ENCODE measurements at regions of chr3 and their contacts with region 1.

Region 1: DNA sequence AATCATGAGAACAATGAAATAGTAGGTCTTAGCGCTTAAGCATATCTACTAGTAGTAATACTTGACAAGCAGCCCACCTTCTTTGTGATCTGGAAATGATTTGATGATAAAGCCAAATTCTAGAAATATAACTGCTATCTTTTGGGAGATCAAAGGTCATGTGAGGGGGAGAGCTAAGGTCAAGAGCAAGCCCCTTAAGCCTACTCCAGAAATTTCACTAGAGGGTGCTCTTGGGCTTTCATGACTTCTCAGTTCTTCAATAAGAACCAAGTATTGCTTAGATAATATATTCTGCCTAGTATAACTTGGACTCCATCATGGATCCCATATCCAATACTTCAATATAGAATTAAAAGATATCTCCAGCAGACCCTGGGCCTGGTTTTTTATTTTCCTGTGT is 319.6 kb downstream of the ZBTB20 start:
- DNase-seq: peak; percentile 11
- H3K4me3 Mint-ChIP-seq: no peak overlapping the region
- H3K27ac Mint-ChIP-seq: no peak overlapping the region
- H3K4me1 Mint-ChIP-seq: peaks cover 4% of the 10 kb centered on the region
- H3K27me3 Mint-ChIP-seq: no peaks in the 10 kb centered on the region

Region 2: GRCh38 chr3:114383875-114384557 is 443.5 kb before region 1 on chr3:
- CTCF ChIA-PET with region 1: interaction called, 3 read pairs
- intact Hi-C with region 1: loop called (anchors 5 kb)
- DNase-seq: peak; percentile 82
- H3K4me3 Mint-ChIP-seq: peak overlapping the region; percentile 70
- H3K27ac Mint-ChIP-seq: peak overlapping the region; percentile 67
- H3K4me1 Mint-ChIP-seq: peaks cover 13% of the 10 kb centered on the region
- H3K27me3 Mint-ChIP-seq: no peaks in the 10 kb centered on the region

Region 3: DNA sequence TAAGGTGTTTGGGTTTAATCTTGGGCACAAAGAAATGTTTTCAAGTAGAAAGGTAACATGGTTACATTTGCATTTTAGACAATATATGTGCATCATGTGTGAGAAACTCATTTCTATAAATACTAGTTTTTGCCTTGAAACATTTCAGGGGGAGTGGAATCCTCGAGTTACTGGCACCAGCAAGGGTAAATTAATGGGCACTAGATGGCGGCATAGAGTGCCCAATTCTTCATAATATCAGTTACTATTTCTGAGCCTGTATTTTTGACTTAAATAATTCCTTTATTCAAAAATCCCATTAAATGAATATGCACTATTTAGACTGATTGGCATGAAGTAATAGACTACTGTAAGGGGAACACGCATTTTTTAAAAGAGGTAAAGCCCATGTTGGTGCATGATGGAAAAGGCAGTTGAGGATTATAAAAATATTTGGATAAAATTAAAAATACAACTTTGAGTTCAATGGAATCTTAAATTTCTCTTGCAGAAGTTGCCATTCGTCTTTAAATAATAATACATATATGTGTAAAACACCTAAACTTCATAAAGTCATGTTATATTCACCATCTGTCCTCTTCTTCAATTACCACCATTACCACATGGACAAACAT is 213.3 kb after region 1 on chr3:
- CTCF ChIA-PET with region 1: no interaction called
- intact Hi-C with region 1: loop called (anchors 2 kb)
- DNase-seq: peak; percentile 65
- H3K4me3 Mint-ChIP-seq: no peak overlapping the region
- H3K27ac Mint-ChIP-seq: no peak overlapping the region
- H3K4me1 Mint-ChIP-seq: peaks cover 16% of the 10 kb centered on the region
- H3K27me3 Mint-ChIP-seq: no peaks in the 10 kb centered on the region

Region 4: GRCh38 chr3:115169808-115170207 is 342.3 kb after region 1 on chr3:
- CTCF ChIA-PET with region 1: interaction called, 3 read pairs
- intact Hi-C with region 1: loop called (anchors 1 kb)
- DNase-seq: no peak
- H3K4me3 Mint-ChIP-seq: no peak overlapping the region
- H3K27ac Mint-ChIP-seq: no peak overlapping the region
- H3K4me1 Mint-ChIP-seq: peaks cover 12% of the 10 kb centered on the region
- H3K27me3 Mint-ChIP-seq: no peaks in the 10 kb centered on the region

Region 5: DNA sequence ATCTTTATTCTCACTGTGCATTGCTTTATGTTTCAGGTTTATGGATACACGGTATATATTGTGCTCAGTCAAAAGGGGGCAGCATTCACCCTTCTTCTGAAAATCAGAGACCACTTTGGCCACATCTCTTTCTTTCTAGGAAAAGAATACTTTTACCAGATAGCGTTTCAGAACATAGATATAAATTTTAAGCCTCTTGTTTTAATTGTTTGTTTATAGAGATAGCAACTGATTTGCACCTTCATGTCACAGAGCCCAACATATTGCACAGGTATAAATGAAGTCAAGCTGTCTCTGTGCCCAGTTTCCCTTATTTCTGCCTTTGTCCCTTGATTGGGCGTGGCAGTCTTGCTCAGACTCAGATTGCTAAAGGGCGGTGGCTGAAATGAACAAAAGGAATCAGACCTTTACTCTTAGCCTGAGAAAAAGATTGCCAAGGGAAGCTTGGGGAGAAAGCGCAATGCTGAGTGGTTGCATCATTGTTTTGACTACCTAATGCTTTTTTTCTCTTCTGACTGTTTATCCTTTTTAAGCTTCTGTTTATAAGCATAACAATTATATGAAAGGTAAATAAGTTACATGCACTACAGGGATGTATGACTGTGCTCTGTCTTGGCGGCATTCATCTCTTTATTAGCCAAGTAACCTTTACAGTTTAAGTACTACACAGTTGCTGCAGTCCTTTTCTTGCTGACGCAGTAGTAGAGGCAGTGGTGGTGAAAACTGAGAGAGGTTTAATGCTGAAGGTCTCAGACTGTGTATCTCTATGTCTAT is 390.4 kb after region 1 on chr3:
- CTCF ChIA-PET with region 1: no interaction called
- intact Hi-C with region 1: loop called (anchors 2 kb)
- DNase-seq: peak; percentile 23
- H3K4me3 Mint-ChIP-seq: no peak overlapping the region
- H3K27ac Mint-ChIP-seq: no peak overlapping the region
- H3K4me1 Mint-ChIP-seq: no peaks in the 10 kb centered on the region
- H3K27me3 Mint-ChIP-seq: no peaks in the 10 kb centered on the region

Region 6: GRCh38 chr3:115814778-115815380 is 987.4 kb after region 1 on chr3:
- CTCF ChIA-PET with region 1: interaction called, 7 read pairs
- intact Hi-C with region 1: loop called (anchors 2 kb)
- DNase-seq: peak; percentile 82
- H3K4me3 Mint-ChIP-seq: no peak overlapping the region
- H3K27ac Mint-ChIP-seq: no peak overlapping the region
- H3K4me1 Mint-ChIP-seq: no peaks in the 10 kb centered on the region
- H3K27me3 Mint-ChIP-seq: no peaks in the 10 kb centered on the region

Measured in activated naive CD4-positive, alpha-beta T cell treated with anti-CD3 and anti-CD28 coated beads for 36 hours (primary cell).